ENCODE measurements at regions of chr2 and their contacts with region 1.

Region 1: GRCh38 chr2:235669269-235669831 is 175.5 kb downstream of the AGAP1 start:
- DNase-seq: peak in 41 of 42 donors; percentile 47 to 93 (median 81)

Region 2: GRCh38 chr2:235746257-235747084 is 77.1 kb after region 1 on chr2:
- intact Hi-C with region 1: loop called (anchors 5 kb)
- DNase-seq: peak in 41 of 42 donors; percentile 35 to 90 (median 76)

Region 3: DNA sequence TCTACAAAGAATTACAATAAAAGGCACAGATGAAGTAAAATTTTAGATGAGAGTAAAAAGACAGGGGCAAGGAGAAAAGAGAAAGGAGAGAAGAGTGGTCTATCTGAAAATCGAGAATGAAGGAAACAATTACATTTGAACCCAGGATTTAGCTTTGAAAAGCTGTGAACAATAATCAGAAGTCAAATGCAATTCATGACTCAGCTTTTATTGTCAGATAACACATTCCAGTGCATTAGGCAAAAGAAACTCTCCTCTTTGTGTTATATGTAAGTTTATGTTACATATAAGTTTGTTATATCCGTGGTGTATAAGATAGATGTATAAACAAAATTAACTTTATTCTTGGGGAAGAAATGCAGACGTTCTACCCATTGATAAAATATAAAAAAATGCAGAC is 214.3 kb after region 1 on chr2:
- intact Hi-C with region 1: no loop called
- DNase-seq: no peak